Psoas muscle (tissue), 8 donors: ENCODE measurements at regions of chr4 and their contacts with region 1.

Region 1: GRCh38 chr4:12633053-12633651 is 851.0 kb downstream of the RAB28 start:
- DNase-seq: peak; percentile 51 to 70
- ATAC-seq: peak in 1 of 4 donors; percentile 46
- H3K4me3 ChIP-seq: no peak overlapping the region
- H3K27ac ChIP-seq: no peak overlapping the region
- H3K4me1 ChIP-seq: no peaks in the 10 kb centered on the region
- H3K27me3 ChIP-seq: peaks cover 0 to 2% (median 0%) of the 10 kb centered on the region in 3 donors
- CTCF ChIP-seq: peak; percentile 72

Region 2: DNA sequence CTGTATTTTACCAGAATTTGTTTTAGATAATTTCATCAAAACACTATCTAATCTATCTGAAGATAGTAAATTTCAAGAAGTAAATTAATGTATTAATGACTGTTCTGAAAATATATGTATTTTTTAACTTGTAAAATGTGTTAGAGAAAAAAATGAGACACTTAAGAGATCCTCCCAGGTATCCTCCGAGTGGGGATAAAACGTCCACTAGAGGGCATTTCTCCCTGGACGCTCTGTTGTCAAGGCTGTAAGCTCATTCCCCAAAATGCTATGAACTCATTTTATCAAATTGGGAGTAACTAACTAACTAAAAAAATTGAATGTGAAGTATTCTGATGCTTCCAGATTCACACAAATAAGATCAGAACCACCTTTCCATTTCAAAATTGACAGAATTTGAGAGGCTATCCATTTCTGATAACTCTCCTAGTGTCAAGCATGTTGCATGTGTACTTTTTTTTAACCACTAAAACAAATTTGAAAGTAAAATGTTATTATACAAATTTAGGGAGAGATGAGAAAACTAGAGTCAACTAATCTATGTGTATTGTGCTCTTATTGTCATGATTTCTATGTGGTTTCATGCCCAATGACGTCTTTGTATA is 867.2 kb before region 1 on chr4:
- intact Hi-C with region 1: loop called (anchors 5 to 10 kb)
- DNase-seq: no peak
- ATAC-seq: no peak
- H3K4me3 ChIP-seq: no peak overlapping the region
- H3K27ac ChIP-seq: no peak overlapping the region
- H3K4me1 ChIP-seq: no peaks in the 10 kb centered on the region
- H3K27me3 ChIP-seq: no peaks in the 10 kb centered on the region
- CTCF ChIP-seq: peak; percentile 47